ENCODE measurements at regions of chr6 and their contacts with region 1.

Region 1: GRCh38 chr6:129621247-129621646 is 88.7 kb downstream of the ARHGAP18 start:
- ATAC-seq: no peak
- H3K4me3 ChIP-seq: no peak overlapping the region
- H3K27ac ChIP-seq: no peak overlapping the region
- H3K4me1 ChIP-seq: no peaks in the 10 kb centered on the region

Region 2: DNA sequence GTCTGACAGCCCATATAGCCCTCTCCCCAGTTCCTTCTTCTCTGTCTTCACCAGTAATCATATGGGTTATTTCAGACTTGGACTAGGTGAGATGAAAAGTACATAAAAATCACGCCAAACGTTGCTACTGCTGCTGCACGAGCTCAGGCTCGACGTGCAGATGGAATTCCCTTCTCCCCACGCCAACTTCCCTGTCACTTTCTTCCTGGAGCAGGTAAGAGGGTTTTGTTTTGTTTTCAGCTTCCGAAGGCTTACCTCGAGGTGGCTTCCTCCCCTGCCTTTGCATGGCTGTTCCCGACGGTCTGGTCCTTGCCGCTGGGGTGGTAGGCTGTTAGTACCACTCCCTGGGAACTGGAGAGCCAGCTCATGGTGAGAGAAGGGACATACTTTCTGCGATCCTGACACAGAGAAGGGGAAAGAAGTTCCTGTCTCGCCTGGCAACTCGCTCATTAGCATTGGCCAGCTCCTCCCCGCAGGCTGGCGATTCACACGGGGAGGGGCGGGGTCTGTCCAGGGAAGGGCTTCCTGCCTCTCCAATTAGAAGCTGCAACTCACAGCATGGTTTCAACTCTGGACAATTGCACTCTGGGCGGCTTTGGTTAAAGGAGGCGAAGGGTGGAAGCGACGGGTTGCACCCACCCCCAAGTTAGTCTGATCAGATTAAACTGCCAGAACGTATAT is 88.7 kb after region 1 on chr6 and contains the start of gene ARHGAP18:
- in situ Hi-C with region 1: loop called in 1 of 9 experiments (anchors 25 kb)
- ATAC-seq: peak; percentile 97 to 99 (median 98)
- H3K4me3 ChIP-seq: peak within 1 kb of the TSS; percentile 19 to 38 (median 33)
- H3K27ac ChIP-seq: no peak within 1 kb of the TSS
- H3K4me1 ChIP-seq: peaks cover 0 to 2% of the 10 kb centered on the region in 2 donors
- total RNA-seq, gene ARHGAP18: 0.67 to 99.5 (median 3.6) TPM

Region 3: DNA sequence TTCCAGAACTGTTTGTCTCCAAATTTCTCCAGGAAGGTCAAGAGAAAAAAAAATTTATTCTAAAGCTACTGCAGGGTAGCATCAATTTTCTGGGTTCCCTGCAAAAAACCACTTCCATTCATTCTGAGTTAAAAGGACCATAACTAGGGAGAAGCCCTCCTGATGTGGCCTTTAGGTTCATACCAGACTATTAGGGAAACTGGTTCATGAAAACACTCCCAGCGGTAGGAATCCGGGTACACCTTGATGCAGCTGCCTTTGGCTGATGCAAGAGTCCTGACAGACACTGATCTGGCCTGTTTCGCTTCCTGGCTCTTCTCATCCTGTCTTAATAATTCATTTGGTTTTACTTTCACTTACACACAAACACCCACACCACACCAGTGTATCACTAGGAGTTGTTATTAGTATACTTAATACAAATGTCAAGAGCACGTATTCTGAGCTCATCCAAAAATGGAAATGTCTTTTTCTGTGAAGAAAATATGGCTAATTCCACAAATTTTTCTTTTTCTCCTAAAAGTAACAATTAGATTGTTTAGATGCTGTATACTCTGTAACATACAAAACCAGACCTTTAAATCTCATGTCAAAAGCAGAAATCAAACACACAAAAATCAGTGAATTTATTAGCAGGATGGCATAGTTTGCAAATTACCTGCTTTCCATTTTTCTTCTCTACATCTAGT is 127.1 kb after region 1 on chr6:
- in situ Hi-C with region 1: loop called in 1 of 9 experiments (anchors 25 kb)
- ATAC-seq: peak in 6 of 8 experiments; percentile 38 to 93 (median 76)
- H3K4me3 ChIP-seq: no peak overlapping the region
- H3K27ac ChIP-seq: peak overlapping the region in 1 of 2 donors; percentile 30
- H3K4me1 ChIP-seq: peaks cover 4% of the 10 kb centered on the region in 2 donors

Measured in motor neuron (in vitro differentiated cells).